Dorsolateral prefrontal cortex (tissue), 120 donors: ENCODE measurements at regions of chr15 and their contacts with region 1.

Region 1: GRCh38 chr15:99409097-99409473 is 156.7 kb upstream of the MEF2A start:
- DNase-seq: peak in 7 of 10 donors; percentile 40 to 64 (median 58)
- H3K4me3 ChIP-seq: peak overlapping the region in 1 of 59 donors; percentile 21
- H3K27ac ChIP-seq: peak overlapping the region in 55 of 59 donors; percentile 4 to 88 (median 68)
- H3K27me3 ChIP-seq: no peaks in the 10 kb centered on the region
- CTCF ChIP-seq: peak in 52 of 56 donors; percentile 13 to 66 (median 41)

Region 2: GRCh38 chr15:99282121-99282520 is 127.0 kb before region 1 on chr15:
- intact Hi-C with region 1: loop called in 1 of 2 experiments (anchors 10 kb)
- DNase-seq: no peak
- H3K4me3 ChIP-seq: no peak overlapping the region
- H3K27ac ChIP-seq: no peak overlapping the region
- H3K27me3 ChIP-seq: no peaks in the 10 kb centered on the region
- CTCF ChIP-seq: no peak

Region 3: DNA sequence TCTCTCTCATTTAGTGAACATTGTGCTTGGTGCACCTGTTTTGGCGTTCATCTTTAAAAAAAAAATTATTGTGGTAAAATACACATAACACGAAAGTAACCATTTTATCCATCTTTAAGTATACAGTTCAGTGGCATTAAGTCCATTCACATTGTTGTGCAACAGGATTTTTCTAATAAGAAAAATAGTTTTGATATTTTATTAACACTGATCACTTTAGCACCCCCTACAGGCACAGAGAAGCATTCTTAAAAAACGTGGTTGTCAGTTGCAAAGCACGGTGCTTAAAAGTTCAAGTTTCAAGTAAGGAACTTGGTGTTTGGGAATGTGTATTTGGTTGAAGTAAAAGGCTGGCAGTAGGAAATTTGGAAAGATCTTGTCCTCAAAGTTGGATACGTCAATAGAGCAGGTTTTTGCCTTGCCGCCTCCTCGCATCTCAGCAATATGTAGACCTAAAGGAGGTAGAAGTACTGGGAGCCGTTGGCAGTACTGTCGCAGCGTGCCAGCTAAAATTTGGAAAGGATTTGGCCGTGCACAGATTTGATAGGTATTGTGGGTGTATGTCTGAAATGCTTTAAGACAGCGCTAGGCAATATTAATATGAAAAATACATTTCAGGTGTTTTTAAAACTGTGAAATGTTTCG is 47.4 kb before region 1 on chr15:
- intact Hi-C with region 1: no loop called
- DNase-seq: peak in 1 of 10 donors; percentile 39
- H3K4me3 ChIP-seq: no peak overlapping the region
- H3K27ac ChIP-seq: peak overlapping the region in 4 of 59 donors; percentile 31 to 43 (median 40)
- H3K27me3 ChIP-seq: no peaks in the 10 kb centered on the region
- CTCF ChIP-seq: peak in 44 of 56 donors; percentile 10 to 48 (median 32)

Region 4: GRCh38 chr15:99565299-99566156 is 156.4 kb after region 1 on chr15 and contains the start of gene MEF2A:
- intact Hi-C with region 1: loop called (anchors 2 to 10 kb)
- DNase-seq: peak; percentile 85 to 93 (median 91)
- H3K4me3 ChIP-seq: peak within 1 kb of the TSS; percentile 49 to 95 (median 84)
- H3K27ac ChIP-seq: peak within 1 kb of the TSS; percentile 93 to 100 (median 99)
- H3K27me3 ChIP-seq: no peaks in the 10 kb centered on the region
- CTCF ChIP-seq: peak in 4 of 56 donors; percentile 10 to 19 (median 12)
- total RNA-seq, gene MEF2A: 54.3 to 131 (median 97.1) TPM

Region 5: GRCh38 chr15:99704444-99704838 is 295.4 kb after region 1 on chr15:
- intact Hi-C with region 1: loop called in 1 of 2 experiments (anchors 10 kb)
- DNase-seq: peak in 1 of 10 donors; percentile 46
- H3K4me3 ChIP-seq: peak overlapping the region in 17 of 59 donors; percentile 2 to 51 (median 22)
- H3K27ac ChIP-seq: peak overlapping the region in 53 of 59 donors; percentile 13 to 93 (median 81)
- H3K27me3 ChIP-seq: no peaks in the 10 kb centered on the region
- CTCF ChIP-seq: peak; percentile 78 to 95 (median 88)

Region 6: DNA sequence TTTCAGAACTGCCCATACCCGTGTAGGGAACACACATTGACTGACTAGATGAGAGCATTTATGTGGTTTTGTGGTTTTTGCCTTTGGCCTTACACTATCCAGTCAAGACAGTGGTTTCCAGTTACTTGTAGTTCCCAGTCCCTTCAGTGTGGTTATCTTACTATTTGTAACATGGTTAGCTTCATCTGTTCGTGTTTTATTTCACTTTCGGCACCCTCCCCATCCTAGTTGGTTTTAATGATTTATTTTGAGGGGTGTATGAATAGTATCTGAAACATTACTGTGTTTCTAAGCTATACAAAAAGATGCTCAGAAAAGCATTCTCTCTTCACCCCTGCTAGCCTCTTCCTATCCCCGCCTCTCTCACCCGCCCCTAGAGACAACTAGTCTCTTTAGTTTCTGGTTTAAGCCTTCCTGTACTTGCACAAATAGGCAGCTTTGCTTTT is 310.0 kb after region 1 on chr15:
- intact Hi-C with region 1: loop called in 1 of 2 experiments (anchors 10 kb)
- DNase-seq: no peak
- H3K4me3 ChIP-seq: no peak overlapping the region
- H3K27ac ChIP-seq: no peak overlapping the region
- H3K27me3 ChIP-seq: no peaks in the 10 kb centered on the region
- CTCF ChIP-seq: no peak